Right ventricle myocardium inferior (tissue), 1 donor: ENCODE measurements at regions of chr16 and their contacts with region 1.

Region 1: DNA sequence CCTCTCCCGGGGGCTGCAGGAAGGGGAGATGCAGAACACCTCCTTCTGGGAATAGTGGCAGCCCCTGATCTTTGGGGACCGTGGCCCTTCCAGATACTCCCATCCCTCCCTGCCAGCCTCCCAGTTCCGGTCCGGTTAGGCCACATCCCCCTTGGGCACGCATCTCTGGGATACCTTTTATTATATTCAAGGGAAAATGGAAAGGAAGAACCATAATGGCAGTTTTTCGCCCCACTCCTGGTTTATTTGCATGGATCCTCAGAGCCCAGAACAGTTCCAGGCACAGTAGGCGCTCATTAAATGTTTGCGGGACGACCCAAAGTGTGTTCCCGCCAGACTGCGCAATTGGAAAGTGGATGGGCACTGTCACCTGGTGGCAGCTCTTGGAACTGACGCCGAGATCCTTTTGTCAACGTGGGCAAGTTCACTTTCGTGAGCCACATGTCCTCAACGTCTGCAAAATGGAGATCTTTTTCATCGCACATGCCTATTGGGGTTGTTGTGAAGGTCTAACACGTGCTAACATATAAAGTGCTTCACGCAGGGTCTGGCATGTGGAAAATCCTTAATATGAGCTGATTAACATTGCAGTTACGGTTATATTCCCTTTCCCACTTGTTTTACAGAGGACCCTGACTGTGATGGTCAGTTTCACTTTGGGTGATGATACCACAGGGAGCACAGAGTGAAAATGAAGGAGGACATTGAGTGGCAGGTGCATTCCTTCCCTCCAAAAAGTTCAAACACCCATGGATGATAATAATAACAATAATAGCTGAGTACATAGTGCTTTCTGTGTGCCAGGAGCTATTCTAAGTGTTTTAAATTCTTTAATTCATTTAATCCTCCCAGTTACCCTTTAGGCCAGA is 1.7 kb upstream of the GPRC5B start:
- DNase-seq: no peak
- ATAC-seq: peak; percentile 57

Region 2: GRCh38 chr16:19555162-19555937 is 331.0 kb before region 1 on chr16 and contains the start of gene VPS35L:
- intact Hi-C with region 1: loop called (anchors 2 kb)
- DNase-seq: peak; percentile 99
- ATAC-seq: peak; percentile 100
- total RNA-seq, gene VPS35L: 24.6 TPM

Region 3: DNA sequence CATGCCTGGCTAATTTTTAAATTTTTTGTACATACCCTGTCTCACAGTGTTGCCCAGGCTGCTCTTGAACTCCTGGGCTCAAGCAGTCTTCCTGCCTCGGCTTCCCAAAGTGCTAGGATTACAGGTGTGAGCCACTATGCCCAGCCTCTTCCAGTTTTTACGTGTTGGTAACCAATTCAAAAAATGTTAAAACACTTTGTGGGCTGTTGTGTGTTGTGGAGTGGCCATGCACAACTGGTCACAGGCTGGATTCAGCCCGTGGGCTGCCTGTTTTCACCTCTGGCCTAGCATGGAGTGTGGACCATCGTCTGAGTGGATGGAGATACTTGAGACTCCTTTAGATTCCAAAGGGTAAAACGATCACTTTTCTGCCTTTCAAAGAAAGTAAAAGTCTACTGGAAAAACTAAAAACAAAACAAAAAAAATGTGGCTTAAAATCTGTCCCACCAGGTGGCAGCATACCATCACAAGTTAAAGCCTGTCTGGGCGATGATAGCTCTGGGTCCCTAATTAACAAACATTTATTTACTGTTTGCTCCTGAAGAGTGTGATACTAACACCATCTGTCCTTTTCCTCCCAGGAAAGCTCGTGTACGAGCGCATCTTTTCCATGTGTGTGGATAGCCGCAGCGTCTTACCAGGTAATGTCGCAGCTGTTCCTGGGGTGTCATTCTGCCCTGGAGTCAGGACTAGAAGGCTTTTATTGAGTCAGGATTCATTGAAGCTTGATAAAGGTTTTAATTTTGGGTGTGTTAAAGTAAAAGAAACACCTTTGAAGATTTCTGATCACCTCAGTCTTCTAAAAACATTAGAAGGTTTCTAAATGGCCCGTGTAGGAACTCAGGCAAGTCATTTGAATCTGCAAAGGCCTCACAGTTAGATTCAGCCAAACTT is 285.0 kb before region 1 on chr16:
- intact Hi-C with region 1: loop called (anchors 1 kb)
- DNase-seq: no peak
- ATAC-seq: no peak

Region 4: DNA sequence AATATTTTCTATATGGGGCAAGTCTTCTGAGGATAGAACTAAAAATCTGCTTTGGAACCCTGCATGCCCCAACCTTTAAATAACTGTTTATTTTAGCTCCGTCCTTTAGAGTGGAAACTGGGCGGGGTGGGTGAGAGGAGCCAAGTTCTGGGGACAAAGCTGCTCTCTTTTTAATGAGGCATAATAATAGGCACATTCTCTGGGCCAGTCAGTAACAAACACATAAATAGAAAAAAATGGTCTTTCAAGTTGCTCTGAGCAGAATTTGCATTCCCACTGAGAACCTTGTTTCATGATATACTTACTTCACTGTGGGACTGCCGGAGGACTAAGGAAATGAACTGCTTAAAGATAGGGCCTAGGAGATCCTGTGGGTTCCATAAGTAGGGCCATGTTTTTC is 219.8 kb before region 1 on chr16:
- intact Hi-C with region 1: loop called (anchors 5 kb)
- DNase-seq: no peak
- ATAC-seq: peak; percentile 71

Region 5: GRCh38 chr16:19717771-19718602 is 168.3 kb before region 1 on chr16 and contains the starts of genes IQCK and KNOP1:
- intact Hi-C with region 1: loop called (anchors 2 kb)
- DNase-seq: peak; percentile 95
- ATAC-seq: peak; percentile 95
- total RNA-seq, gene IQCK: 5.2 TPM
- total RNA-seq, gene KNOP1: 8.4 TPM

Region 6: GRCh38 chr16:19804538-19805323 is 81.6 kb before region 1 on chr16:
- intact Hi-C with region 1: loop called (anchors 2 kb)
- DNase-seq: peak; percentile 84
- ATAC-seq: peak; percentile 57

Region 7: GRCh38 chr16:19844945-19845641 is 41.2 kb before region 1 on chr16:
- intact Hi-C with region 1: loop called (anchors 5 kb)
- DNase-seq: no peak
- ATAC-seq: no peak

Region 8: DNA sequence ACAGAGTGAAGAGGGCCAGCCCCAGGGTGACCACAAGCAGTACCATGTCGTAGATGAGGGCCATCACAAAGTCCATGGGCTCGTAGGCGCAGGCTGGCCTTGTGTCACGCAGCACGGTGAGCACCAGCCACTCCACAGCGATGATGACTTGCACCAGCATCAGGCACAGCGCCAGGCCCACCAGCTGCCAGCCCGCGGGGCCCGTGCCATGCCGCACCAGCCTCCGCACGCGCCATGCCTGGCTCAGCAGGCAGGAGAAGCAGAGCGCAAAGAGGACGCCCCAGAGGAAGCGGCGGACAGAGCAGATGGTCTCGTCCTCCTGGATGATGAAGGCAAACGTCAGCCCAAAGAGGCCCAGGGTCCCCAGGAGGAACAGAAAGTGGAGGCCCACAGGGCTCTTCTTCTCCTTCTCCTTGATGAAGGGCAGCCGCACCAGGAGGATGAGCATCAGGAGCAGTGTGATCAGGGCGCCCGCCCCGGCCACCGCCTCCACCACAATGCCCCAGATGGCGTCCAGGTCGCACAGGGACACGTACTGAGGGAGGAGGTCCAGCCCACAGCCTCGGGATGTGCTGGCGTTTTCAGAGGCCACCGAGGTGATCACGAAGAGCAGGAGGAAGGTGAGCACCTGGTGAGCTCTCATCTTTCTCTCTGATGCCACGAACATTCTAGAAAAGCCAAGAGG is 14.0 kb before region 1 on chr16:
- intact Hi-C with region 1: no loop called
- DNase-seq: no peak
- ATAC-seq: no peak

Region 9: GRCh38 chr16:19991614-19992013 is 105.3 kb after region 1 on chr16:
- intact Hi-C with region 1: no loop called
- DNase-seq: no peak
- ATAC-seq: no peak